ENCODE measurements at regions of chr1 and their contacts with region 1.

Region 1: GRCh38 chr1:219659005-219659600 is 46.2 kb upstream of the ZC3H11B start:
- DNase-seq: no peak
- ATAC-seq: peak; percentile 80

Region 2: DNA sequence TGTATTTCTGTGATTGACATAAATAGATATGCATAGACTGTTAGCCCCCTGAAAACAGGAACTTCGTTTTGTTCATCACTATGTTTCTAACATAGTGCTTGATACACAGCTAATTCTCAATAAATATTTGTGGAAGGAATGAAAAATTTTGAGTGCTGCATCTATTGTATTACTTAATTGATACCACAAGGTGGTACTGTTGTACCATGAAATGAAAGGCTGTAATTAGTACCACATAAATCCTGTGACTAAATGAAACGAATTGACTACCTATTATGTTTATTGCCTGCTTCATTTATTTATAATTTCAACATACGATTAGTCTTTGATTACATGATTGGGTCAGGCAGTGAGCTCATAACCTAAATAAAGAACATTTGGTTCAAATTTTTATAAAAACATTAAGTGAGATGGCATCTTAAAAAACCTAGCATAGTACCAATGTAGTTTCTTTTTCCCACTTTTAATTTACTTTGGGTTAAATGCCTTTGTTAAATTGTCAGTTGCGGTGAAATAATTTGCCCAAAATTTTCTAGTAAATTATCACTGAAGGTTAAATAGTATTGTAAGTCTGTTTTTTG is 1329.0 kb before region 1 on chr1:
- intact Hi-C with region 1: loop called (anchors 5 kb)
- DNase-seq: no peak
- ATAC-seq: peak; percentile 25

Region 3: DNA sequence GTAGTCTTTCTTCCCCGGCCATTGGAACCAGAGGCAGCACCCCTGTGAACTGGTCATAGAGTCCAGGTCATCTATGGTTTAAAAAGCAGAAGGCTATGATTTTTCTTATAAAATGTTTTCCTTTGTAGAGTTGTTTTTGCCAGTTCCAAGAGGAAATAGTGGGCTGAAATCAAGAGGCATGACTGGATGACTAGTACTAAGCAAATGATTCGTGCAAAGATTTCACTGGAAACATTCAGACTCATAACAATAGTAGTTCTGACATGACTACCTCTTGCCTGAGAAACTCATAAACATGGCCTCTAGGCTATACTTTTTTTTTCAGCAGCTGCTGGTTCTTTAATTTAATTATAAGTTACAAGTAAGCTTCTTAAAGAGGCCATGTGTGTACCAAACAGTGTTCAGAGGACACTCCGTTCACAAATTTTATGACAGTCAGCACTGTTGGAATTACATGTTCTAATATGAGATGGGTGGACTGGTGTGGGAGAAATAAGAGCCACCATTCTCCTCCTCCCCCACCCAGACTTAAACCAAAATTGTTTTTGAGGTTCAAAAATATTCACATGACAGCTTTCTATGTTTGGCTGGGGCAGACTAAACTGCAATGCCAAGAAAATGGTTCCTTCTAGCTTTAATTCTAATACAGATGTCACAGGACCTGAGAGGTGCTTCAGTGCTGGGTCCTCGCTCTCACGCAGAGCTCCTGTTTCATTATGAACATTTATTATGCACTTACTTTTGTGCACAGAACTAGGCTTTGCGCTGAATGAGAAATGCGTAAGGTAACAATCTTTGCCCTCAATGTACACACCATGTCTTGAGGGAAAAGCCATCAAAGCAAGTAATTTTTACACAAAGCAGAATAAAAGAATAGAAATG is 193.7 kb before region 1 on chr1:
- intact Hi-C with region 1: no loop called
- DNase-seq: no peak
- ATAC-seq: no peak

Region 4: DNA sequence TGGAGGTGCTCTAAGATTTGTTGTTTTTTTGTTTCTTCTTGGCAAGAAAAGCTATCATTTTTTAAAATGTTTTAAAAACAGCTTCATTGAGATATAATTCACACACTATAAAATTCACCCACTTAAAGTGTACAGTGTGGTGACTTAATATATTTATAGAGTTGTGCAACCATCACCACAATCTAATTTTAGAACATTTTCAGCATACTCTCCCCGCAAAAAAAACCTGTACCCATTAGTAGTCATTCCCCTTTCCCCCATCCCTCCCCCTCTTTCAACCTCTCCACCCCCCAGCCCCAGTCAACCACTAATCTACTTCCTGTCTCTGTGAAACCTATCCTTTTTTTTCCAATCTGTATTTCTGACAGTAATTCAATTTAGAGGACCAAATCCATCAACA is 76.8 kb before region 1 on chr1:
- intact Hi-C with region 1: loop called (anchors 10 kb)
- DNase-seq: no peak
- ATAC-seq: peak; percentile 75